CD4-positive, alpha-beta memory T cell (primary cell): ENCODE measurements at regions of chr20 and their contacts with region 1.

Region 1: GRCh38 chr20:31605031-31605901 is at the start of gene ID1:
- DNase-seq: peak; percentile 85 to 91 (median 86)
- H3K4me3 ChIP-seq: peak within 1 kb of the TSS; percentile 86 to 95
- H3K4me3 Mint-ChIP-seq: peak within 1 kb of the TSS; percentile 87 to 96 (median 92)
- H3K27ac ChIP-seq: peak within 1 kb of the TSS; percentile 26
- H3K27ac Mint-ChIP-seq: peak within 1 kb of the TSS; percentile 66 to 89 (median 84)
- H3K4me1 ChIP-seq: peaks cover 29% of the 10 kb centered on the region
- H3K4me1 Mint-ChIP-seq: peaks cover 10 to 37% (median 22%) of the 10 kb centered on the region in 4 donors
- H3K27me3 ChIP-seq: peaks cover 5% of the 10 kb centered on the region
- H3K27me3 Mint-ChIP-seq: peaks cover 24 to 34% of the 10 kb centered on the region in 2 donors
- total RNA-seq, gene ID1: 0.50 TPM in 1 of 2 experiments, not detected in the other

Region 2: DNA sequence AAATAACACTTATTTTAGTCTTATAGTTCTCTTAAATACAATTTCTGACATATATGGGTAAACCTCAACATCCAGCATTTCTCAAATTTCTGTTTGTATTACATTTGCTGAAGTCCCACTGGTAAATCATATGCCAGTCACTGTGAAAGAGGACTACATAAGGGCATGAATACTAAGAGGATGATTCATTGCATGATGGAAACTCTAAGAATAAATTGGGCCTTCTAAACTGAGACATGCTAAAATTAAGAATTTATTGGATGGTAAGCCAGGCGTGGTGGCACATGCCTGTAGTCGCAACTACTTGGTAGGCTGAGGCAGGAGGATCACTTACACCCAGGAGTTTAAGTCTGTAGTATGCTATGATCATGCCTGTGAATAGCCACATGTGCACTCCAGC is 152.7 kb before region 1 on chr20:
- CTCF ChIA-PET with region 1: no interaction called
- POLR2A ChIA-PET with region 1: no interaction called
- intact Hi-C with region 1: no loop called
- DNase-seq: no peak
- H3K4me3 ChIP-seq: no peak overlapping the region
- H3K4me3 Mint-ChIP-seq: no peak overlapping the region
- H3K27ac ChIP-seq: no peak overlapping the region
- H3K27ac Mint-ChIP-seq: no peak overlapping the region
- H3K4me1 ChIP-seq: no peaks in the 10 kb centered on the region
- H3K4me1 Mint-ChIP-seq: no peaks in the 10 kb centered on the region
- H3K27me3 ChIP-seq: no peaks in the 10 kb centered on the region
- H3K27me3 Mint-ChIP-seq: peaks cover 6 to 9% of the 10 kb centered on the region in 2 donors

Region 3: GRCh38 chr20:31555203-31555775 is 50.0 kb before region 1 on chr20:
- CTCF ChIA-PET with region 1: interaction called, 1,094 read pairs
- POLR2A ChIA-PET with region 1: interaction called, 10 read pairs
- intact Hi-C with region 1: no loop called
- DNase-seq: no peak
- H3K4me3 ChIP-seq: no peak overlapping the region
- H3K4me3 Mint-ChIP-seq: no peak overlapping the region
- H3K27ac ChIP-seq: no peak overlapping the region
- H3K27ac Mint-ChIP-seq: peak overlapping the region in 2 of 7 donors; percentile 12 to 41
- H3K4me1 ChIP-seq: peaks cover 6% of the 10 kb centered on the region
- H3K4me1 Mint-ChIP-seq: peaks cover 4 to 12% (median 6%) of the 10 kb centered on the region in 4 donors
- H3K27me3 ChIP-seq: no peaks in the 10 kb centered on the region
- H3K27me3 Mint-ChIP-seq: no peaks in the 10 kb centered on the region

Region 4: DNA sequence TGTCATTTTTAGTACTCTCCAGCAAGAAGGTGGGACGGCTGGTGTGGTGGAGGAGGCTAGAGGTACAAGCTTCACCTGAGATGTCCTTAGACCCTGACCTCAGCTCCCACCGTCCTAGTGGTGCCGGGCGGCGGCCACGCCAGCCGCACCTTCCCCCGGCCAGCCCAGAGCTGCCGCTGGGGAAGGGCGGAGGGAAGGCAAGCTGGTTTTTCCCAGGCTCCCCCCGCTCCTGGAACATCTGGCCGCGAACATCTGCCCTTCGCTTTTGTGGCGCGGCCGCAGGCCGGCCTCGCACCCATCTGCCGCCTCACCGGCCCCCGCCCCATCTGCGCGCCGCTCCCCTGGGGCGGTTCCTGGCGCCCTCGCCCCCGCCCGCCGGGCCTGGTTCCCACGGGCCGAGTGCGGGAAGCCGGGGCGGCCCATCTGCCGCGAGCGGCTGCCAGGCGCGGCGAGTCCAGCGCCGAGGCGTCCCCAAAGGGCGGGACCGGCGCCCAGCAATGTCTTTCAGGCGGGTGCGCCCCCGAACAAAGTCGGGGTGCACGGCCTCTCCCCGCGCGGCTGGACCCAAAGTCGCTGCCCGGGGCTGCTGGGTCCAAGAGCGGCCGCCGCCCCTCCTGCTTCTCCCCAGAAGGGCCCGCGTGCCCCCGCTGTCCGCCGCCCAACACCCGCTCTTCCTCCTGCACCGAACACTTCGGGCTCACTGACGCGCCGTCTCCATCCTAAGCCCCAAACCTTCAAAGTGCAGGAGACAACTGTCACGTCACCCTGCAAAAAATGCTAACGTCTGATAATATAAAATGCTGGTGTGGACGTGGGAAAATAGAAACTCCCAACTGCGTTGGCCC is 17.5 kb before region 1 on chr20:
- CTCF ChIA-PET with region 1: no interaction called
- POLR2A ChIA-PET with region 1: interaction called, 3 read pairs
- intact Hi-C with region 1: loop called (anchors 2 kb)
- DNase-seq: no peak
- H3K4me3 ChIP-seq: no peak overlapping the region
- H3K4me3 Mint-ChIP-seq: peak overlapping the region; percentile 62 to 91 (median 84)
- H3K27ac ChIP-seq: no peak overlapping the region
- H3K27ac Mint-ChIP-seq: peak overlapping the region in 2 of 7 donors; percentile 0 to 3
- H3K4me1 ChIP-seq: peaks cover 9% of the 10 kb centered on the region
- H3K4me1 Mint-ChIP-seq: peaks cover 5 to 11% (median 7%) of the 10 kb centered on the region in 4 donors
- H3K27me3 ChIP-seq: peaks cover 9% of the 10 kb centered on the region
- H3K27me3 Mint-ChIP-seq: peaks cover 16 to 20% of the 10 kb centered on the region in 2 donors